ENCODE measurements at regions of chr5 and their contacts with region 1.

Region 1: GRCh38 chr5:79514391-79515105 is 614 bp upstream of the HOMER1 start:
- DNase-seq: peak; percentile 92
- H3K4me3 ChIP-seq: peak overlapping the region; percentile 71
- H3K27ac ChIP-seq: peak overlapping the region; percentile 63
- H3K4me1 ChIP-seq: peaks cover 39% of the 10 kb centered on the region
- CTCF ChIP-seq: no peak

Region 2: GRCh38 chr5:77775790-77776553 is 1738.6 kb before region 1 on chr5 and contains the start of gene TBCA:
- CTCF ChIA-PET with region 1: no interaction called
- POLR2A ChIA-PET with region 1: no interaction called
- intact Hi-C with region 1: loop called (anchors 10 kb)
- DNase-seq: peak; percentile 94
- H3K4me3 ChIP-seq: peak within 1 kb of the TSS; percentile 77
- H3K27ac ChIP-seq: peak within 1 kb of the TSS; percentile 80
- H3K4me1 ChIP-seq: peaks cover 30% of the 10 kb centered on the region
- CTCF ChIP-seq: peak; percentile 47; the same call in 1 of the 2 replicates
- total RNA-seq, gene TBCA: 174 and 214 TPM in 2 replicates

Region 3: DNA sequence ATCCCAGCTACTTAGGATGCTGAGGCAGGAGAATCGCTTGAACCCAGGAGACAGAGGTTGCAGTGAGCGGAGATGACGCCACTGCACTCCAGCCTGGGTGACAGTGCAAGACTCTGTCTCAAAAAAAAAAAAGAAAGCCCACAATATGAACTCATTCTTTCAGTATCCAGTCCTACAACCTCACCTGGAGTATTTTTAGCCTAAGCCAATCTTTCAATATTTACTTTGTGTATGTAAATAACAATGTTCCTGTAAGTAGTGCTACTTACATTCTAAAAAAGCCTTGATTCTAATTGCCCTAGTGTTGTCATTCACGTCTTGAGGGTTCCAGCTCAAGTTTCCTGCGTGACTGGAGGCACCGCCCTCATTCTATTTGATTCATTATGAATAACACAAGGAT is 340.9 kb before region 1 on chr5:
- CTCF ChIA-PET with region 1: no interaction called
- POLR2A ChIA-PET with region 1: no interaction called
- intact Hi-C with region 1: no loop called
- DNase-seq: no peak
- H3K4me3 ChIP-seq: no peak overlapping the region
- H3K27ac ChIP-seq: no peak overlapping the region
- H3K4me1 ChIP-seq: no peaks in the 10 kb centered on the region
- CTCF ChIP-seq: no peak

Region 4: GRCh38 chr5:79436224-79436623 is 78.3 kb before region 1 on chr5:
- CTCF ChIA-PET with region 1: no interaction called
- POLR2A ChIA-PET with region 1: no interaction called
- intact Hi-C with region 1: no loop called
- DNase-seq: no peak
- H3K4me3 ChIP-seq: no peak overlapping the region
- H3K27ac ChIP-seq: no peak overlapping the region
- H3K4me1 ChIP-seq: peaks cover 1% of the 10 kb centered on the region
- CTCF ChIP-seq: no peak

Region 5: GRCh38 chr5:79612667-79613198 is 98.2 kb after region 1 on chr5:
- CTCF ChIA-PET with region 1: no interaction called
- POLR2A ChIA-PET with region 1: interaction called, 3 read pairs
- intact Hi-C with region 1: loop called (anchors 2 kb)
- DNase-seq: peak; percentile 39
- H3K4me3 ChIP-seq: peak overlapping the region; percentile 87
- H3K27ac ChIP-seq: peak overlapping the region; percentile 82
- H3K4me1 ChIP-seq: peaks cover 20% of the 10 kb centered on the region
- CTCF ChIP-seq: no peak

Region 6: DNA sequence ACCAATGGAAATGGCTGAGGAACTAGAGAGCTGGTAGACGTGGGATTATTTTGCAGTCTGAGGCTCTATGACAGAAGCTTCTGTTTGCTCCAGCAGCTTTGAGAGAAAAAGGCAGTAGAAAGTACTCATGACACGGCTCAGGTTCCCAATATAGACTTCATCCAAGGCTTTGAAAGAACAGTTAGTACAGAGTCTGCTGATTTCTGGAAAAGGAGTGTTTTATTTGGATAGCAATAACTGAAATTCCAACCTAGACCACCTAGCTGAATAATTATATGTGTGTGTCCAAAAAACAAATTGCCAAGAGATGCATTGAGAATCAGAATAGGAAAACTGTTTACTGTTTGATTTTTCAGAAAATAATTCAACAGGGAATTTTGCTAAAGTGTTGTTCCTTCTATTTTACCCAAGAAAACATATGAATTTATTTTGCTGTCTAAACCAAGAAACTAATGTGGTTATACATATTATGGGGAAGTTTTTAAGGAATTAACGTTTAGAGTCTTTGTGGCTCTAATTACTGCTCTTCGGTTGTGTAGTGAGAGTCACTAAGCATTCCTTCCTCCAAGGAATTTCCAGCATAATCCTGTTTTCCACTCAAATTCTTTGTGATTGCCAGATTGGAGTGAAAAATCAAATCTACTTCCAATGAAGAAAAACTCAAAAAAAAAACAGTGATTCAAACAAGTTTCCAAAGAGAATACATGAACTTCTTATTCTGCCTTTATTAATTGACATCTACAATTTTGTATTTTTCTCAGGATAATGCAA is 494.6 kb after region 1 on chr5:
- CTCF ChIA-PET with region 1: no interaction called
- POLR2A ChIA-PET with region 1: no interaction called
- intact Hi-C with region 1: no loop called
- DNase-seq: no peak
- H3K4me3 ChIP-seq: no peak overlapping the region
- H3K27ac ChIP-seq: no peak overlapping the region
- H3K4me1 ChIP-seq: no peaks in the 10 kb centered on the region
- CTCF ChIP-seq: no peak